Transverse colon (tissue), 4 donors: ENCODE measurements at regions of chr17 and their contacts with region 1.

Region 1: DNA sequence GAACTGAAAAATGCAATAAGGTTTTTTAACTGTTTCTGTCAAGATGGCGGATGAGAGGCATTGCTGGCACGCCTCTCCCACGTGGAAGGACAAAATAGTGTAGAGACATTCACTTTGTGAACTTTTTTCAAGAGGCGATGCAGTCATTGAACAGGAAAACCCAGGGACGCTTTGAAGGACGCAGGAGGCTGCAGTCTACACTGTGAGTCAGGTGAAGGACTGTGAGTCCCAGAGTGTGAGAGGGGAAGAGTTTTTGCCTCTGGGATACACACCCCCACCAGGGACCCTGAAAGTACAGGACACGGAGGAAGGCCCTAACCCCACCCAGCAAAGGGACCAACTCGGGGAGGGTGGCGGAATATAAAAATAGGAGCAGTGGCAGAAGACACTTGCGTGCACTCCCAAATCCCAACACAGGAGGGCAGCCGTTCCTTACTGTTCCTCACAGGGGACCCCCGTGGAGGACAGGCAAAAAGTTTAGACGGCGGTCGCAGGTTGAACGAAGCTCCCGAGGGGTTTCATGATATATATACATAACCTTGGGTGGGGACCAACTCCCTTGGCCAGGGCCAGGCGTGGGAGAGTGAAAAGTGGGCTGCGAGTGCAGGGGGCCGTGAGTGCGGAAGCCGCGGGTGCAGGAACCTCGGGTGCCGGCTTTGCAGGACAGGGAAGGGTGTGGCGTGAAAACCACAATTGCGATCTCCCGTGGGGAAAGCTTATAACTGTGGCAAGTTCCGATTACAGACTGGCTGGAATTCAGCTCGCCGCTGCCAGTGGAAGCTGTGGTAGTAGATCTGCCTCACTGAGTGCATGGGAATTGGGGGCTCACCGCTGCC is 82.0 kb upstream of the ALOX12 start:
- DNase-seq: peak; percentile 75
- H3K4me3 ChIP-seq: peak overlapping the region in 1 of 4 donors; percentile 26
- H3K27ac ChIP-seq: no peak overlapping the region
- H3K4me1 ChIP-seq: peaks cover 0 to 8% (median 4%) of the 10 kb centered on the region in 4 donors
- H3K27me3 ChIP-seq: peaks cover 31% of the 10 kb centered on the region
- CTCF ChIP-seq: peak; percentile 71 to 80 (median 77)
- EP300 ChIP-seq: no peak
- POLR2A ChIP-seq: no peak

Region 2: DNA sequence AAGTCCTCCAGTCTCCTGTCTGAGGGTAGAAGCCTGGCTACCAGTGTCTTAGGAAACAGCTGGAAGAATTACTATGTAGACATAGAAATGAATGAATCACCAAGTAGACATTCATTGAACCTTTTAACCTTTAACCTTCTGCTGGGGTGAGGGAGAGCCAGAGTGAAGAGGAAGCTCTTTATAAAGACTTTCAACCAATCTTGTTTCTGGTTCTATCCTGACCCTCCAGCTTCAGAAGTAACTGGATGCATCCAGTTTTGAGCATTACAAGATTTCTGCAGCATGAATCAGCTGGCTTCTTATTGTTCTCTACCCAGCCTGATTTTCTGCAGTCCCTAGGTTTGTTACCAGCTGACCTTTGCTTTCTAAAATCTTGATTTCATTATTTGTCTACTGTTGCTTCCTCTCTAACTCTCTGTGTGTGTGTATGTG is 90.8 kb before region 1 on chr17:
- in situ Hi-C with region 1: no loop called
- intact Hi-C with region 1: no loop called
- DNase-seq: no peak
- H3K4me3 ChIP-seq: no peak overlapping the region
- H3K27ac ChIP-seq: no peak overlapping the region
- H3K4me1 ChIP-seq: no peaks in the 10 kb centered on the region
- H3K27me3 ChIP-seq: peaks cover 6% of the 10 kb centered on the region
- CTCF ChIP-seq: no peak
- EP300 ChIP-seq: no peak
- POLR2A ChIP-seq: no peak

Region 3: GRCh38 chr17:6994666-6995246 is 80.9 kb after region 1 on chr17:
- in situ Hi-C with region 1: no loop called
- intact Hi-C with region 1: loop called (anchors 5 kb)
- DNase-seq: no peak
- H3K4me3 ChIP-seq: no peak overlapping the region
- H3K27ac ChIP-seq: no peak overlapping the region
- H3K4me1 ChIP-seq: peaks cover 0 to 11% (median 8%) of the 10 kb centered on the region in 4 donors
- H3K27me3 ChIP-seq: no peaks in the 10 kb centered on the region
- CTCF ChIP-seq: no peak
- EP300 ChIP-seq: no peak
- POLR2A ChIP-seq: no peak

Region 4: DNA sequence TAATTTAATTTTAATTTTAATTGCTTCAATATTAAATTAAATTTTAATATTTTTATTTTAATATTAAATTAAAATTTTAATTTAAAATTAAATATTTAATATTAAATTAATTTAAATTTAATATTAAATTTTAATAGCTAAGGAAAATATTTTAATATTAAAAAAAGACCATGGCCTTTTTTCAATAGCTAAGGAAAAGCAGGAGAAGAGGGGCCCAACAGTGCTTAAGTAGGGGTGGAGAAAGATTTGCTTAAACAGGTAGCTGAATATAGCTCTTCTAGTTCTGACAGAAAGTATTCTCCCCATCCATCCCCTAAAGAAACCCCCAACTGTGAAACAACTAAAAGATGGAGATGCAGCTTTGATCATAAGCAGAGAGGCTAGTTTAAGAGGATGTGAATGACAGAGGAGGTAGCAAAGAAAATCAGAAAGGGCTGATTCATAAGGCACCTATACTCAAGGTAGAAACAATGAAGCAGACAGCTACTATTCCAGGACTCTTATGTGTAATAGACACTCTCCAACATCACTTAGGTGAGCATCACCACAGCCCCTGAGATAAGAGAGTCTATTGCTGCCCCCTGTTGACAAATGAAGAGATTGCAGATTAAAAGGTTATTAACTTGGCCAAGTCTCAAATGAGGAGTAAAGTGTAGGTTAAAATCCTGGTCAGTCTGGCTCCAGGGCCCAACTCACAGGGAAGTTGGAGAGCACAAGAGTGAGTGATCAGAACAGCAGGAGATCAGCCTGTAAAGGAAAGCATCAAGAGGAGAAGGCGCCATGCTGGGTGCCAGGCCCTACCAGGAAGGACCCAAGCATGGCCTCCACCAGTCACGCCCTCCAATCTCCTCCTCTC is 90.8 kb after region 1 on chr17:
- in situ Hi-C with region 1: loop called in 3 of 4 experiments (anchors 5 kb)
- intact Hi-C with region 1: loop called (anchors 1 kb)
- DNase-seq: no peak
- H3K4me3 ChIP-seq: no peak overlapping the region
- H3K27ac ChIP-seq: no peak overlapping the region
- H3K4me1 ChIP-seq: peaks cover 0 to 3% (median under 1%) of the 10 kb centered on the region in 4 donors
- H3K27me3 ChIP-seq: no peaks in the 10 kb centered on the region
- CTCF ChIP-seq: peak; percentile 65 to 79 (median 73)
- EP300 ChIP-seq: no peak
- POLR2A ChIP-seq: no peak

Region 5: DNA sequence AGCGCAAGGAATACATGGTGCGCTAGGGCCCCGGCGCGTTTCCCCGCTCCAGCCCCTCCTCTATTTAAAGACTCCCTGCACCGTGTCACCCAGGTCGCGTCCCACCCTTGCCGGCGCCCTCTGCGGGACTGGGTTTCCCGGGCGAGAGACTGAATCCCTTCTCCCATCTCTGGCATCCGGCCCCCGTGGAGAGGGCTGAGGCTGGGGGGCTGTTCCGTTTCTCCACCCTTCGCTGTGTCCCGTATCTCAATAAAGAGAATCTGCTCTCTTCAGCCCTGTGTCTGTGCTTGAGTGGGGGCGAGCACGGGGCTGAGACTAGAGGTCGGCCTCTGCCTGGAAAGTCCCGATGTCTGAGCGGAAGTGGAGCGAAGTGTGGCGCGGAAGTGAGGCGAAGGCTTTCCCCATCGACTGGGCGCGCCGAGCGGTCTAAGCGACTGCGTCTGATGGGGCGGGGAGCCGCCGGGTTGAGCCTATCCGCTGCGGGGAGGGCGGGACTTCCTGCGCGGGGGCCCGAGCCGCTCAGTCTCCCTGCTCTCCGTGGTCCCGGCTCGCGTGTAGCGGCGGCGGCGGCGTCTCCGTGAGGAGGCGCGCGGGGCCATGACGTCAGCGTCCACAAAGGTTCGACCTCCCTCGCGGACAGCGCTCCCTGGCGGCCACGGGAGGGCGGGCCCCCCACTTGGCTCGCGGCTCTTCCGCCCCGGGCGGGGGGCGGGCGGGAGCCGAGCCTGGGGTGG is 100.6 kb after region 1 on chr17:
- in situ Hi-C with region 1: loop called in 3 of 4 experiments (anchors 5 kb)
- intact Hi-C with region 1: no loop called
- DNase-seq: peak; percentile 99
- H3K4me3 ChIP-seq: peak overlapping the region; percentile 73 to 97 (median 84)
- H3K27ac ChIP-seq: peak overlapping the region; percentile 95 to 98 (median 96)
- H3K4me1 ChIP-seq: peaks cover 15 to 67% (median 40%) of the 10 kb centered on the region in 4 donors
- H3K27me3 ChIP-seq: no peaks in the 10 kb centered on the region
- CTCF ChIP-seq: peak; percentile 39 to 90 (median 75)
- EP300 ChIP-seq: peak; percentile 36
- POLR2A ChIP-seq: peak; percentile 96

Region 6: DNA sequence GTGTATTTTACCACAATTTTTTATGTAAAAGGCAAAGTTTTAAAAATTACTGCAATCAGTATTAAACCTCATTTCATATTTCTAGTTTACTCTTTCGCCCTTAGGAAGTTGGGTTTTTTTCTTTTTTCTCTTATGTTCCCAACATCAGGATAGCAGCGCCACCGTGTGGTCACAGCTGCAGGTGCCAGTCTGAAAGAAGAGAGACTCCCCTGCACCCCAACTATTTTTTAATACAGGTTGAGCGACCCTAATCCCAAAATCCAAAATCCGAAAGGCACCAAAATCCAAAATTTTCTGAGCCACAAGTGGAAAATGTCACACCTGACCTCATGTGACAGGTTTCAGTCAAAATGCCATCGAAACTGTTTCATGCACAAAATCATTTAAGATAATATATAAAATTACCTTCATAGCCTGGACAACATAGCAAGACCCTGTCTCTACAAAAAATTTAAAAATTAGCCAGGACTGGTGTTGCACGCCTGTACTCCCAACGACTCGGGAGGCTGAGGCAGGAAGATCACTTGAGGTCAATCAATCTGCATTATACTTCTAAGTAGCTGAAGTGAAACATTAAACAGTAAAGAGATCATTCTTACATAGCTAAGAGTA is 222.5 kb after region 1 on chr17:
- in situ Hi-C with region 1: loop called in 2 of 4 experiments (anchors 25 kb)
- intact Hi-C with region 1: no loop called
- DNase-seq: peak; percentile 78
- H3K4me3 ChIP-seq: peak overlapping the region in 1 of 4 donors; percentile 18
- H3K27ac ChIP-seq: no peak overlapping the region
- H3K4me1 ChIP-seq: peaks cover 0 to 20% (median 8%) of the 10 kb centered on the region in 4 donors
- H3K27me3 ChIP-seq: peaks cover 19% of the 10 kb centered on the region
- CTCF ChIP-seq: peak; percentile 89 to 93 (median 91)
- EP300 ChIP-seq: no peak
- POLR2A ChIP-seq: no peak

Region 7: GRCh38 chr17:7173687-7174602 is 260.1 kb after region 1 on chr17:
- in situ Hi-C with region 1: loop called in 1 of 4 experiments (anchors 25 kb)
- intact Hi-C with region 1: loop called (anchors 5 kb)
- DNase-seq: peak; percentile 50
- H3K4me3 ChIP-seq: no peak overlapping the region
- H3K27ac ChIP-seq: no peak overlapping the region
- H3K4me1 ChIP-seq: peaks cover 3 to 15% (median 14%) of the 10 kb centered on the region in 4 donors
- H3K27me3 ChIP-seq: peaks cover 16% of the 10 kb centered on the region
- CTCF ChIP-seq: no peak
- EP300 ChIP-seq: no peak
- POLR2A ChIP-seq: no peak